Activated naive CD4-positive, alpha-beta T cell treated with anti-CD3 and anti-CD28 coated beads for 36 hours (primary cell): ENCODE measurements at regions of chr6 and their contacts with region 1.

Region 1: DNA sequence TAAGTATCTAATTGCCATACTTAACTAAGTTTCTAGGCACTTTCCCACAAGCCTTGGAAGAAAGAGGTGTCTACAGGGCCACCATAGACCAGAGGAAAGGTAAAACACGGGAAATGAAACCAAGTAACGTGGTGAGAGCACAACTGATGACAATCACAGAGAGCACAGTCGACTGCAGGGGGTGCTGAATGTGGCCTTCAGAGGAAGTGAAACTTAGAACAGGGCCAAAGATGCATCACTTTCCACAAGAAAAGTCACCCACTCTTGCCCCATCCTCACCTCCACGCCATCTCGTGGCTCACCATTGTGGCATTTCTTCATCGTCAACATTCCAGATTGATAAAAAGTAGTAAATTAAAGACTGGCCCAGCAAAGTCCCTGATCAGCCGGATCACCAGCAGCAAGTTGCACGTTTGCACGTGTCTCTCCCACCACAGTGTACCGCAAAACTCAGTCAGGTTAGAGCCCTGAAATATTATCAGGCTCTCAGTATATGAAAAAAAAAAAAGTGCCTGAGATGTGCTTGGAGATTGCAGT is 31.4 kb downstream of the HIVEP2 start:
- DNase-seq: peak; percentile 82
- H3K4me3 Mint-ChIP-seq: peak overlapping the region; percentile 64
- H3K27ac Mint-ChIP-seq: peak overlapping the region; percentile 96
- H3K4me1 Mint-ChIP-seq: peaks cover 84% of the 10 kb centered on the region
- H3K27me3 Mint-ChIP-seq: no peaks in the 10 kb centered on the region

Region 2: GRCh38 chr6:142871910-142872331 is 41.7 kb before region 1 on chr6:
- CTCF ChIA-PET with region 1: no interaction called
- intact Hi-C with region 1: loop called (anchors 1 kb)
- DNase-seq: peak; percentile 83
- H3K4me3 Mint-ChIP-seq: peak overlapping the region; percentile 33
- H3K27ac Mint-ChIP-seq: peak overlapping the region; percentile 84
- H3K4me1 Mint-ChIP-seq: peaks cover 83% of the 10 kb centered on the region
- H3K27me3 Mint-ChIP-seq: no peaks in the 10 kb centered on the region

Region 3: DNA sequence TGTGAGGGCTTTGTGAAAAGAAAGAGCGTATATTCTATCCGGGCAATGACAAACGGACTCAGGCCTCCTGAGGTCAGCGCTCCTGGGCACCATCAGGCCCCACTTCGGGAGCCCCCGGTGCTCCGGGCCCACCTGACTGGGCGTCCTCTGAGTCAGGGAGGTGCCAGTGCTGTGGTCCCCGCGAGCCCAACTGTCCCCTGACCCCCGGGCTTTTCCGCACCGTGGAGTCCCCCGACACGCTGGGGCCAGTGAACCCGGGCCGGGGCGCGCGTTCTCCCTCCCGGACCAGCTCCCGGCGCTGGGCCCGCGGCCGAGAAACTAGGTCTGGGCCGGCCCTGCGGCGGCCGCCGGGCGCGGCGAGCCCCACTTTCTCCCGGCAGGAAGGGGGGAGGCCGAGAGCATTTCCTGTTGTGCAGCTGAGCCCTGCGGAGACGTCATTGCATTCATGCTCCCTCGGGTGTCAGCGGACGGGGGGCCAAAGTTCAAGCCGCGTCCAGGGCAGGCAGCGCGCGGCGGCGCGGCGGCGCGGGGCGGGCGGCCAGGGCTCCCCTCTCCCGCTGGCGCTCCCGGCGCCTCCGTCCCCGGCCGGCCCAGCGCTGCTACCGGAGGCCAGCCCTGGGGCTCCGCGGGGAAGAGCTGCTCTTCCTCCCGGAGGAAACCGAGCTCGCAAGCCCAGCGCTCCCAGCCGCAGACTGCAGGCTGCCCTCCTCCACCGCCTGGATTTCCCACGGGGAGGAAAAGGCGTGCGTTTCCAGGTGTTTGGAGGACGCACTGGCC is 13.1 kb after region 1 on chr6:
- CTCF ChIA-PET with region 1: interaction called, 6 read pairs
- intact Hi-C with region 1: loop called (anchors 1 kb)
- DNase-seq: peak; percentile 80
- H3K4me3 Mint-ChIP-seq: peak overlapping the region; percentile 86
- H3K27ac Mint-ChIP-seq: peak overlapping the region; percentile 97
- H3K4me1 Mint-ChIP-seq: peaks cover 53% of the 10 kb centered on the region
- H3K27me3 Mint-ChIP-seq: no peaks in the 10 kb centered on the region

Region 4: GRCh38 chr6:143015300-143015706 is 101.7 kb after region 1 on chr6:
- CTCF ChIA-PET with region 1: no interaction called
- intact Hi-C with region 1: no loop called
- DNase-seq: peak; percentile 14
- H3K4me3 Mint-ChIP-seq: no peak overlapping the region
- H3K27ac Mint-ChIP-seq: no peak overlapping the region
- H3K4me1 Mint-ChIP-seq: peaks cover 8% of the 10 kb centered on the region
- H3K27me3 Mint-ChIP-seq: no peaks in the 10 kb centered on the region